ENCODE measurements at regions of chr9 and their contacts with region 1.

Region 1: DNA sequence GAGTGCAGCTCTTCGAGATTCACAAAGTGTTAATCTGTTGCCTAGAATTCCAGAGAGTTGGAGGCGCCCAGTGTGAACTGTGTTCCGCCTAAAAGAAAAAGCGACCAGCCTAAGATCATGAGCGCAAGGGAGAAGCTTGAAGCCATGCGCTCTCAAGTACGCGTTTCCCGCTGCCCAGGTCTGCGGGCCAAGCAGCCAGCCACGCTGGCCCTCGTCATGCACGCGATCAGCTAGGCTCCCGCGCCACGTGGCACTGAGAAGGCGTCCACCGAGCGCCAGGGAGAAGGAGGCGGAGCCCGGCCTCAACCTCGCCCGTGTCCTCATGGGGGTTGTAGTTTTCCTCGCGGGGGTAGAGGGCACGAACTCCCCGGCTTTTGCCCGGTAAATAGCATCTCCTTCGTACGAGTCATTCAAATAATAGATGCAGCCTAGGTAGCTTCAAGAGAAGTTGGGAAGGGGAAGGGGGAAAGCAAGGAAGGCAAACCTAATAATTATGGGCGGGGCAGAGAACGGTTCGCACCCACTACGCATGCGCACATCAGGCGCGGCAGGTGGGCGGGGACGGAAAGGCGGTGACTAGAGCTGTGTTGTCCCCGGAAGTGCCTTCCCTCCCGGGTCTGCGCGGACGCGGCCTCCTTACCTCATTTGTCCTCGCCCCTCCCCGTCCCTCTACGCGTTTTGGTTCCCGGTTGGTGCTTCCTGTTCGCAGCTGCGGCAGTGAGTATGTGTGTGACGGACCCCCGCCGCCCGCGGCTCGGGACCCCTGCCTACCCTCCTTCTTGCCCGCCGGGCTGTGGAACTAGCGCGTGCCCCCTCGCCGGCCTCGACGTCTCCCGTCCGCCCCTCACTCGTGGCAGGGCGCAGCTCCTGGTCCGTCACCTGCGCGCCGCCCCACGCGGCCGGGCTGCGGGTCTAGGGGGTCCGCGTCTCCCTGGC is at the start of gene ZCCHC7:
- DNase-seq: peak; percentile 98
- ATAC-seq: peak; percentile 92
- H3K4me3 ChIP-seq: peak within 1 kb of the TSS; percentile 80 to 97 (median 94)
- H3K4me3 Mint-ChIP-seq: peak within 1 kb of the TSS; percentile 100
- H3K27ac ChIP-seq: peak within 1 kb of the TSS; percentile 93 to 98
- H3K27ac Mint-ChIP-seq: peak within 1 kb of the TSS; percentile 100
- H3K4me1 ChIP-seq: peaks cover 36 to 44% of the 10 kb centered on the region in 2 donors
- H3K4me1 Mint-ChIP-seq: peaks cover 44% of the 10 kb centered on the region
- H3K27me3 ChIP-seq: no peaks in the 10 kb centered on the region
- H3K27me3 Mint-ChIP-seq: no peaks in the 10 kb centered on the region
- CTCF ChIP-seq: no peak
- total RNA-seq, gene ZCCHC7: 81.9 and 83.5 TPM in 2 replicates

Region 2: DNA sequence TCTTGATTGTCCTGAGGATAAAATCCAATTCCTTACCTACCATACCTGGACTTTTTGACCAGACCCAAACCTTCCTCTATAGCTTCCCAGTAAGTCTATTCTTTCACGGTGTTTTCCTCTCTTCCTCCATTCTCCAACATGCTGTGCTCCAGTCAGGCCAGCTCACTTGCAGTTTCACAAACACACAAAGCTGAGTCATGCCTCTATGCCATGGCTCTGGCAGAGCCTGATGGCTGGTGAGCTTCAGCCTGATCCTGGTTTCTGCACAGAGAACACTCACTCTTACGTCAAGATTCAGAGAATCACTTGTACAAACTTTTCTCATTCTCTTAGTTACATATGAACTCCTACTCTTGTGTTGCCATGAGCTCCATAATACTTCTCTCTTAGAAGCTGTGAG is 58.4 kb before region 1 on chr9:
- CTCF ChIA-PET with region 1: no interaction called
- POLR2A ChIA-PET with region 1: no interaction called
- intact Hi-C with region 1: no loop called
- DNase-seq: no peak
- ATAC-seq: no peak
- H3K4me3 ChIP-seq: no peak overlapping the region
- H3K4me3 Mint-ChIP-seq: no peak overlapping the region
- H3K27ac ChIP-seq: no peak overlapping the region
- H3K27ac Mint-ChIP-seq: no peak overlapping the region
- H3K4me1 ChIP-seq: peaks cover 30 to 43% of the 10 kb centered on the region in 2 donors
- H3K4me1 Mint-ChIP-seq: peaks cover 44% of the 10 kb centered on the region
- H3K27me3 ChIP-seq: no peaks in the 10 kb centered on the region
- H3K27me3 Mint-ChIP-seq: no peaks in the 10 kb centered on the region
- CTCF ChIP-seq: no peak

Region 3: GRCh38 chr9:37079370-37080164 is 40.6 kb before region 1 on chr9:
- CTCF ChIA-PET with region 1: interaction called, 8 read pairs
- POLR2A ChIA-PET with region 1: interaction called, 21 read pairs
- intact Hi-C with region 1: loop called (anchors 1 kb)
- DNase-seq: peak; percentile 96
- ATAC-seq: peak; percentile 95
- H3K4me3 ChIP-seq: peak overlapping the region; percentile 84 to 99 (median 95)
- H3K4me3 Mint-ChIP-seq: peak overlapping the region; percentile 99
- H3K27ac ChIP-seq: peak overlapping the region; percentile 91 to 97
- H3K27ac Mint-ChIP-seq: peak overlapping the region; percentile 98
- H3K4me1 ChIP-seq: peaks cover 54 to 55% of the 10 kb centered on the region in 2 donors
- H3K4me1 Mint-ChIP-seq: peaks cover 74% of the 10 kb centered on the region
- H3K27me3 ChIP-seq: no peaks in the 10 kb centered on the region
- H3K27me3 Mint-ChIP-seq: no peaks in the 10 kb centered on the region
- CTCF ChIP-seq: no peak

Region 4: DNA sequence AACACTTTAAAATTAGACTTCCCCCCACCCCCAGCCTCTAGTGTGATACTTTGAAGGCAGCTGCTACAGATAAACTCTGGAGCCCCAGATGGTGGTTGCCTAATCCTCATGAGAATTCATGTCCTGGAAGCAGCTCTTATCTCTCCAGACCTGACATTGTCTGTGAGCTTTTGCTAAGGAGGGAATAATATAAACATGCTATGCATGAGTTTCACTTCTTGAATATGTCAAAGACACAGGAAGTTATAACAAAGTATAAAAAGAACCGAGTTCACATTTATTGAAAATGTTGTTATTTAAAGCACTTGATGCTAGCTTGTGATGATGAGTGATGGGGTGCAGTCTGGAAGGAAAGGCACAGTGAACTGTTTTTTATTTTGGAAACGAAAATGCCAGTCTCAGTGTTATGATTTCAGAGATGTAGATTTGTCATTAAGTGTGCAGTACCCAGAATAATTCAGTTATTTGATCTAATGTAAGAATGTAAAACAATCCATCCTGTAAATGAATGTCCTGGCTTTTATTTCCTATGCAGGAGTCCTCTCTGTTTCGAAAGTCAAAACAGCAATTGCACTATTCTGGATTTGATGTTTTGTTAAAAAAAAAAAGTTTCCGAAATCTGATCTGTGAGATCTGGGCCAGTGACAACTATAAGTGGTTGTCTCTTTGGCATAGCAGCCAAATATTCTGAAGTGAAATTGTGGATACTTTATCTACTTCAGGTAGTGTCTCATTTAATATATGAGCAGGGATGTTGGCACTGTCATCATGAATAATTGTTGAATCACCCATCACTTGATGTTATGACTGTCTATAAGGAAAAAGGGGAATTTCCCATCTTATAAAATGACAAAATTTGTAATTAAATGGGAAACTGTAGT is 77.2 kb after region 1 on chr9:
- CTCF ChIA-PET with region 1: interaction called, 4 read pairs
- POLR2A ChIA-PET with region 1: interaction called, 3 read pairs
- intact Hi-C with region 1: loop called (anchors 5 kb)
- DNase-seq: peak; percentile 83
- ATAC-seq: peak; percentile 79
- H3K4me3 ChIP-seq: peak overlapping the region in 3 of 5 experiments; percentile 13 to 35 (median 21)
- H3K4me3 Mint-ChIP-seq: peak overlapping the region; percentile 76
- H3K27ac ChIP-seq: peak overlapping the region; percentile 81 to 87
- H3K27ac Mint-ChIP-seq: peak overlapping the region; percentile 87
- H3K4me1 ChIP-seq: peaks cover 83 to 91% of the 10 kb centered on the region in 2 donors
- H3K4me1 Mint-ChIP-seq: peaks cover 82% of the 10 kb centered on the region
- H3K27me3 ChIP-seq: no peaks in the 10 kb centered on the region
- H3K27me3 Mint-ChIP-seq: no peaks in the 10 kb centered on the region
- CTCF ChIP-seq: no peak

Region 5: GRCh38 chr9:37302277-37302676 is 182.1 kb after region 1 on chr9:
- CTCF ChIA-PET with region 1: interaction called, 10 read pairs
- POLR2A ChIA-PET with region 1: no interaction called
- intact Hi-C with region 1: no loop called
- DNase-seq: peak; percentile 88
- ATAC-seq: peak; percentile 90
- H3K4me3 ChIP-seq: peak overlapping the region in 3 of 5 experiments; percentile 5 to 42 (median 17)
- H3K4me3 Mint-ChIP-seq: peak overlapping the region; percentile 82
- H3K27ac ChIP-seq: peak overlapping the region; percentile 79 to 88
- H3K27ac Mint-ChIP-seq: peak overlapping the region; percentile 96
- H3K4me1 ChIP-seq: peaks cover 79 to 84% of the 10 kb centered on the region in 2 donors
- H3K4me1 Mint-ChIP-seq: peaks cover 81% of the 10 kb centered on the region
- H3K27me3 ChIP-seq: no peaks in the 10 kb centered on the region
- H3K27me3 Mint-ChIP-seq: no peaks in the 10 kb centered on the region
- CTCF ChIP-seq: no peak

Region 6: DNA sequence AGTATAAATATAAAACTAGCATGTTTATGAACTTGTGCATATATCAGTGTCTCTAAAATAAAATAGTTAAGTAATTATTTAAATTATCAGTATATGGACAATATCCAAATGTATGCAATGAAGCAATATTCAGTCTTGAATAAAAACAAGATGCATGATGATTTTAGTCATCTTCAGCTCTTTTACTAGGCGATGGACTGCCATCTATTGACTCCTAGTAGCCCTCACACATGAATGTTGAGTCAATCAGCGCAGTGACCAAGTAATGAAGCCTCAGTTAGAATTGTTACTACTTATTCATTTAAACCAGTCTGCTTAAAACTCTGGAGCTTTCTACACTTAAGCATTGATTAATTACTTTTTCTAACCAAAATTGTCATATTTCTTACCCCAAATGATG is 209.4 kb after region 1 on chr9:
- CTCF ChIA-PET with region 1: interaction called, 12 read pairs
- POLR2A ChIA-PET with region 1: interaction called, 14 read pairs
- intact Hi-C with region 1: loop called (anchors 2 kb)
- DNase-seq: peak; percentile 75
- ATAC-seq: peak; percentile 40
- H3K4me3 ChIP-seq: no peak overlapping the region
- H3K4me3 Mint-ChIP-seq: peak overlapping the region; percentile 44
- H3K27ac ChIP-seq: peak overlapping the region in 1 of 2 donors; percentile 4
- H3K27ac Mint-ChIP-seq: peak overlapping the region; percentile 90
- H3K4me1 ChIP-seq: peaks cover 25 to 84% of the 10 kb centered on the region in 2 donors
- H3K4me1 Mint-ChIP-seq: peaks cover 58% of the 10 kb centered on the region
- H3K27me3 ChIP-seq: no peaks in the 10 kb centered on the region
- H3K27me3 Mint-ChIP-seq: no peaks in the 10 kb centered on the region
- CTCF ChIP-seq: peak; percentile 82

Region 7: DNA sequence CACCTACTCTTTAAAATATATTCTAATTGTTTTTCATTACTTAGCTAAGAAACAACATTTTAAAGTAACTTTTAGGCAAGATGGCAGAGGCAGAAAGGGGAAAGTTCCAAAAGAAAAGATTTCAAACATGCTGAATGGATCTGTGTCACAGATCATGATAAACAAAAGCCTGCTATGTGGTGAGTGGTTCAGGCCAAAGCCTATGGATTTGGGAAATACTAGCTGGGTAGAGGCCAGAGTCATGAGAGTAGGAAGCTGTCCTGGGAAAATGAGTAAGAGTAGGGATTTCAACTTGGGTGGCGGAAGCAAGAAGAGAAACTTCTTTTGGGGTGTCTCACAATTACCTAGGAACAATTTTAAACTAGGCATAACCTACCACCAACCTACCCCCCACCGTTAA is 233.6 kb after region 1 on chr9:
- CTCF ChIA-PET with region 1: no interaction called
- POLR2A ChIA-PET with region 1: no interaction called
- intact Hi-C with region 1: no loop called
- DNase-seq: no peak
- ATAC-seq: no peak
- H3K4me3 ChIP-seq: no peak overlapping the region
- H3K4me3 Mint-ChIP-seq: no peak overlapping the region
- H3K27ac ChIP-seq: peak overlapping the region in 1 of 2 donors; percentile 43
- H3K27ac Mint-ChIP-seq: peak overlapping the region; percentile 38
- H3K4me1 ChIP-seq: no peaks in the 10 kb centered on the region
- H3K4me1 Mint-ChIP-seq: peaks cover 3% of the 10 kb centered on the region
- H3K27me3 ChIP-seq: no peaks in the 10 kb centered on the region
- H3K27me3 Mint-ChIP-seq: no peaks in the 10 kb centered on the region
- CTCF ChIP-seq: no peak